Activated CD4-positive, alpha-beta memory T cell treated with anti-CD3 and anti-CD28 coated beads for 36 hours (primary cell): ENCODE measurements at regions of chr1 and their contacts with region 1.

Region 1: DNA sequence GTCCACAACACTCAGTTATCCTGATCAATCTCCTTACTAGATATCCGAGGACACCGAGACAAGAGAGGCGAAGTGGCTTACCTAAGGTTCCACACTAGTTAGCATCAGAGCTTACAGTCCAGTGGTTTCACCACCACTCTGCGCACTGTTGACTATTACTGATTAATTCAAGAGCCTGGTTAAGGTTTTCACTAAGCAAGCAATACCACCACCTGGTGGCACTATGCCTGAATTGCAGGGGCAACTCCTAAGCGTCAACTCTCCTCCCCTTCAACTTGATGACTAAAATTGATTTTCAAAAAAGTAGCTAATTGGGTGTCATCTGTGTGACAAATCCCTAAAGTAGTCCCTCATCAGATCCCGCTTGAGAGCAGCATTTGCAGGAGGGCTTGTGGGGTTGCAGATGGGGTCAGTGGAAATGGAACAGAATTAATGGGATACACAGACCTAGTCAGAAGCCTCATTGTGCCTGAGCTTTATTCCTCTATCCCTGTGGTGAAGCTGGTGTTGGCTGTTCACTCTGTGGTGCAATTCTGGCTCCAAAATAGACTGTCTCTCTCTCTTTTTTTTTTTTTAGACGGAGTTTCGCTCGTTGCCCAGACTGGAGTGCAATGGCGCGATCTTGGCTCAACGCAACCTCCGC is 9.1 kb downstream of the TTC22 start:
- DNase-seq: peak; percentile 75
- H3K4me3 Mint-ChIP-seq: no peak overlapping the region
- H3K27ac Mint-ChIP-seq: no peak overlapping the region
- H3K4me1 Mint-ChIP-seq: peaks cover 22% of the 10 kb centered on the region
- H3K27me3 Mint-ChIP-seq: no peaks in the 10 kb centered on the region

Region 2: DNA sequence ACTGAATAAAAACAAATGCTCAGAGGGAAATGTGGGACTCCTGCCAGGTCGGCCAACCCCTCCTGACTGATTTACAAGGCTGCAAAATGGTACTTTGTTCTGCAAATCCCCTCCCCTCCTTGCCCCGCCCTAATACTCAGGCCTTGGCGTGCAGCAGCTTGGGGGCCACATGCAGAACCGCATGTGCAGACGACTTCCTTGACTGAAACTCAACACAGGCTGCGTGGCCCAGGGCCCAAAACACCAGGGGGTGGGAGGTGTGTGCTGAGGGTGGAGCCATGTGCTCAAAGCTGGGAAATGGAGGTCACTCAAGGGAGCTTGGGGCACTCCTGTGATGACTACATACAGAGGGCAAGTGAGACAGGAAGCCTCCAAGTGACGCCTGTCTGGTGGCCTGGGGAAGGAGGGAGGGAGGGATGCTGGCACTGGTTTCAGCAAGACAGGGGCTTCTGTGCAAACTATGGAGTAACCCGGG is 504.8 kb before region 1 on chr1:
- CTCF ChIA-PET with region 1: no interaction called
- POLR2A ChIA-PET with region 1: no interaction called
- intact Hi-C with region 1: loop called (anchors 10 kb)
- DNase-seq: peak; percentile 87
- H3K4me3 Mint-ChIP-seq: peak overlapping the region; percentile 3
- H3K27ac Mint-ChIP-seq: peak overlapping the region; percentile 85
- H3K4me1 Mint-ChIP-seq: peaks cover 81% of the 10 kb centered on the region
- H3K27me3 Mint-ChIP-seq: no peaks in the 10 kb centered on the region

Region 3: DNA sequence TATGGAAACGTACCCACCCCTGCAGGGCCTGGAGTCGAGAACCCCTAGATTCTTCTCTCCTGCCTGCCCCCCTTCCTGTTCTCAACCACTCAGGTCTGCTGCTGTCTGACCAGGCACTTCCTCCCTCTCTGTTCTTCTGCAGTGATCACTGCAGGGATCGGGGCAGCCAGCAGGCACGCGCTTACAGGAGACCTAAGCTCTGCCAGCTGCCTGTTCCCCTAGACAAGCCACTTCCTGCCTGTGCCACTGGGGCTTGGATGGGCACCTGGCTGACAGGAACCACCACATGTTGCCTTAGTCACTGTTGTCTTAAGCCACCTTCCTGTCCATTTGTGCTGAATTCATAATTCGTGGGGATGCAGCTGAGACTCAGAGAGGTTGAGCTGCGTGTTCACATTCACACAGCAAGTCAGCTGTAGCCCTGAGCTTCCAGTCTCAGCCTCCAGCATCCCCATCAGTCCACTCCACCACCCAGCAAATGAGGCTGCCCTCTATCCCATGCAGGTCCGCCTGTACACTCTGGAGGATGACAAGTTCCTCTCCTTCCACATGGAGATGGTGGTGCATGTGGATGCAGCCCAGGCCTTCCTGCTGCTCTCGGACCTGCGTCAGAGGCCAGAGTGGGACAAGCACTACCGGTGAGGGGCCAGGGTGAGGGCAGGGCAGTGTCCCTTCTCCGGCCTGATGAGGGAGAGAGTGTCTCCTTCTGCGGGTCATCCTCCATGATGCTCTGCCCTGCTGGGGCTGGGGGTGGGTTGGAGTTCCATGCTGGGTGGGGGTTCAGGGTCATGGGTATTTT is 187.2 kb before region 1 on chr1:
- CTCF ChIA-PET with region 1: no interaction called
- POLR2A ChIA-PET with region 1: no interaction called
- intact Hi-C with region 1: no loop called
- DNase-seq: peak; percentile 50
- H3K4me3 Mint-ChIP-seq: no peak overlapping the region
- H3K27ac Mint-ChIP-seq: no peak overlapping the region
- H3K4me1 Mint-ChIP-seq: peaks cover 12% of the 10 kb centered on the region
- H3K27me3 Mint-ChIP-seq: no peaks in the 10 kb centered on the region

Region 4: GRCh38 chr1:54742282-54742681 is 49.7 kb before region 1 on chr1:
- CTCF ChIA-PET with region 1: no interaction called
- POLR2A ChIA-PET with region 1: no interaction called
- intact Hi-C with region 1: no loop called
- DNase-seq: no peak
- H3K4me3 Mint-ChIP-seq: no peak overlapping the region
- H3K27ac Mint-ChIP-seq: no peak overlapping the region
- H3K4me1 Mint-ChIP-seq: no peaks in the 10 kb centered on the region
- H3K27me3 Mint-ChIP-seq: no peaks in the 10 kb centered on the region

Region 5: DNA sequence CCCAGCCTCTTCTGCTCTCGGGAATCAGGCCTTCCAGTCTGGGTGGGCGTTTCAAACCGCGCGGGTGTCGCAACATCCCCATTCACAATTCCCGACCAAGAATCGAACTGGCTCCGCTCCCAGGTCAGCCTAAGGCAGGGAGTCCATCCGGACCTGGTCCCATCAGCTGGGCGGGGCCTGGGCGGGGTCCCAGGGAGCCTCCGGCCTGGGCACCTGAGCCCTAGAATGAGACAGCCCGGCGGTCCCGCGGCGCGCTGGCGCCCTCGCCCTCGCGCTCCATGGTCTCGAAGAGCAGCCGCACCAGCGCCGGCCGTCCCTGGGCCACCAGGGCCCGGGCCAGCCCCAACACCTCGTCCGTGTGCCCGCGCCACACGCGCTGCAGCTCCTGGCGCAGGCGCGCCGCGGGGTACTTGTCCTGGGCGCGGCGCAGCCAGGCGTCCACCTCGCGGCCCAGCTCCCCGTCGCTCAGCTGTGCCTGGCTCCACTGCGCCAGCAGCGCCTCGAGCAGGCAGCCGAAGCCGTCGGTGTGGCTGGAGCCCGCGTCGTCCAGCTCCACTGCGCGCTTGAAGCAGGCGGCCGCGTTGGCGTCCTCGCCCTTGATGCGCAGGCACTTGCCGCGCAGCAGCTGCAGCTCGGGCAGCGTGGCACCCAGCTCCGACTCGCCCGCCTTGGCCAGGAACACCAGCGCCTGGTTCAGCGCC is 10.8 kb before region 1 on chr1:
- CTCF ChIA-PET with region 1: interaction called, 10 read pairs
- POLR2A ChIA-PET with region 1: no interaction called
- intact Hi-C with region 1: no loop called
- DNase-seq: no peak
- H3K4me3 Mint-ChIP-seq: no peak overlapping the region
- H3K27ac Mint-ChIP-seq: no peak overlapping the region
- H3K4me1 Mint-ChIP-seq: no peaks in the 10 kb centered on the region
- H3K27me3 Mint-ChIP-seq: no peaks in the 10 kb centered on the region